ENCODE measurements at regions of chr9 and their contacts with region 1.

Region 1: DNA sequence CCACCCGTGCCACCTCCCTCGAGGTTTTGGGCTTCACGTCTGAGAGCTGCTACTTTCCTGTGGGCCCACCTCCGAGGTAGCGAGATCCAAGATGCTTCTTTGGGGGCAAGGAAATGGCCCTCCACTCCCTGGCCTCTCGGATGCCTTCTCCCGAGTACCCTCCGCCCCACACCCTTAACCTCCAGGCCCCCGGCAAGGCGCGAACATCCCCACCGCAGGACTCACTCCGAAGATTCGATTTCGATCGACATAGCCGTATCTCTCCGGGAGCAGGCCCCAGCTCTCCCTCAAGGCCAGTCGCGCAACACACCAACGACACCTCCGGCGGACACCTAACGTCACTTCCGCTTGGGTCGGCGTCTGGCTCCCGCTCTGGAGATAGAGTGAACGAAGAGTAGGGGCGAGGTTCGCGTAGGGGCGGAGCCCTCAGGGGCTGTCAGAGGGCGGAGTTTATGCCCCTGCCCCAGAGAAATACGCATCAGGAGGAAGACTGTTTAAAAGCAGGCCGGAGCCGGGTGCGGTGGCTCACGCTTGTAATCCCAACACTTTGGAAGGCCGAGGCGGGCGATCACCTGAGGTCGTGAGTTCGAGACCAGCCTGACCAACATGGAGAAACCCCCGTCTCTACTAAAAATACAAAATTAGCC is at the start of gene SMU1:
- DNase-seq: peak; percentile 96
- ATAC-seq: peak; percentile 98
- H3K4me3 ChIP-seq: peak within 1 kb of the TSS; percentile 90
- H3K27ac ChIP-seq: peak within 1 kb of the TSS; percentile 93
- H3K4me1 ChIP-seq: no peaks in the 10 kb centered on the region
- H3K27me3 ChIP-seq: no peaks in the 10 kb centered on the region
- CTCF ChIP-seq: no peak
- POLR2A ChIP-seq: peak; percentile 93
- RAD21 ChIP-seq: no peak
- total RNA-seq, gene SMU1: 36.0 and 37.8 TPM in 2 replicates

Region 2: DNA sequence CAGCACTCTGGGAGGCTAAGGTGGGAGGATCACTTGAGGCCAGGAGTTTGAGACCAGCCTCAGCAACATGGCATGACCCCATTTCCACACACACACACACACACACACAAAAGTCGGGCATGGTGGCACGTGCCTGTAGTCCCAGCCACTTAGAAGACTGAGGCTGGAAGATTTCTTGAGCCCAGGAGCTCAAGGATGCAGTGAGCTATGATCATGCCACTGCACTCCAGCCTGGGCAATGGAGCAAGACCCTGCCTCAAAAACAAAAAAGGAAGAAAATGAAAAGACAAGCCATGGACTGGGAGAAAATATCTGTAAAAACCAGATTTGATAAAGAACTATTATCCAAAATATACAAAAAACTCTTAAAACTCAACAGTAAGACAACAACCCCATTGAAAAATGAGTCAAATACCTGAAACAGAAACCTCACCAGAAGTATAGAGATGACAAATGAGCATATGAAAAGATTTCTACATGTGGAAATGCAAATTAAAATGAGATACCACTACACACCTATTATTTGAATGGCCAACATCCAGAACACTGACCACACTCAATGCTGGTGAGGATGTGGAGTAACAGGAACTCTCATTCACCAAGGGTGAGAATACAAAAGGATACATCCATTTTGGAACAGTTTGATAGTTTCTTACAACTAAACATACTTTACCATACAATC is 26.7 kb before region 1 on chr9:
- CTCF ChIA-PET with region 1: no interaction called
- POLR2A ChIA-PET with region 1: no interaction called
- dilution Hi-C with region 1: no loop called
- in situ Hi-C with region 1: no loop called
- intact Hi-C with region 1: loop called (anchors 2 kb)
- DNase-seq: no peak
- ATAC-seq: no peak
- H3K4me3 ChIP-seq: no peak overlapping the region
- H3K27ac ChIP-seq: no peak overlapping the region
- H3K4me1 ChIP-seq: no peaks in the 10 kb centered on the region
- H3K27me3 ChIP-seq: no peaks in the 10 kb centered on the region
- CTCF ChIP-seq: no peak
- POLR2A ChIP-seq: no peak
- RAD21 ChIP-seq: no peak

Region 3: DNA sequence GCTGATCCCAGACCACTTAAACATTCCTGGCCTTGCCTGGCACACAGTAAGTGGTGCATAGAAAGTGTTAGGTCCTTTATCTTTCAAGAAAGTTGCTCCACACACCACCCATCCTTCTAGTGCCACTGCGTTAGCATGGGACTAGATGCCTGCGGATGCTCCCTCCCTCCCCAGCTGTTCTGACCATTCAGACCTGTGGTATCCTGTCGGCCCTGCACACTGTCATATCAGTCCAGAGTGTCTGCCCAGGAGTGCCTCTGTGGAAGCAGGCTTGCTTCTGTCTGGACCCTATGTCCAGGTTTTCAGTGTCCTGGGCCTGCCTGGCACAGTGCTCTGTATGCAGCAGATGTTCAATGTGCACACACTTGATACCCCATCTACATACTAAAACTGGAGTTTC is 38.3 kb after region 1 on chr9:
- CTCF ChIA-PET with region 1: no interaction called
- POLR2A ChIA-PET with region 1: no interaction called
- dilution Hi-C with region 1: no loop called
- in situ Hi-C with region 1: no loop called
- intact Hi-C with region 1: loop called (anchors 1 kb)
- DNase-seq: no peak
- ATAC-seq: no peak
- H3K4me3 ChIP-seq: no peak overlapping the region
- H3K27ac ChIP-seq: no peak overlapping the region
- H3K4me1 ChIP-seq: peaks cover 5% of the 10 kb centered on the region
- H3K27me3 ChIP-seq: no peaks in the 10 kb centered on the region
- CTCF ChIP-seq: no peak
- POLR2A ChIP-seq: no peak
- RAD21 ChIP-seq: no peak

Region 4: GRCh38 chr9:33167046-33167808 is 90.7 kb after region 1 on chr9 and contains the start of gene B4GALT1:
- CTCF ChIA-PET with region 1: no interaction called
- POLR2A ChIA-PET with region 1: interaction called, 3 read pairs
- dilution Hi-C with region 1: no loop called
- in situ Hi-C with region 1: loop called (anchors 5 kb)
- intact Hi-C with region 1: loop called (anchors 1 kb)
- DNase-seq: peak; percentile 90
- ATAC-seq: peak; percentile 89
- H3K4me3 ChIP-seq: peak within 1 kb of the TSS; percentile 100
- H3K27ac ChIP-seq: peak within 1 kb of the TSS; percentile 99
- H3K4me1 ChIP-seq: peaks cover 33% of the 10 kb centered on the region
- H3K27me3 ChIP-seq: no peaks in the 10 kb centered on the region
- CTCF ChIP-seq: no peak; the same call in 1 of the 2 replicates
- POLR2A ChIP-seq: peak; percentile 92
- RAD21 ChIP-seq: no peak
- total RNA-seq, gene B4GALT1: 8.8 and 11.9 TPM in 2 replicates

Region 5: GRCh38 chr9:33264473-33265177 is 188.1 kb after region 1 on chr9 and contains the starts of genes BAG1 and CHMP5:
- CTCF ChIA-PET with region 1: no interaction called
- POLR2A ChIA-PET with region 1: no interaction called
- dilution Hi-C with region 1: no loop called
- in situ Hi-C with region 1: no loop called
- intact Hi-C with region 1: loop called (anchors 1 kb)
- DNase-seq: peak; percentile 99
- ATAC-seq: peak; percentile 98
- H3K4me3 ChIP-seq: peak within 1 kb of the TSS; percentile 91
- H3K27ac ChIP-seq: peak within 1 kb of the TSS; percentile 76
- H3K4me1 ChIP-seq: peaks cover 10% of the 10 kb centered on the region
- H3K27me3 ChIP-seq: no peaks in the 10 kb centered on the region
- CTCF ChIP-seq: peak; percentile 48
- POLR2A ChIP-seq: peak; percentile 83
- RAD21 ChIP-seq: no peak
- total RNA-seq, gene BAG1: 4.5 and 8.3 TPM in 2 replicates
- total RNA-seq, gene CHMP5: 70.6 and 95.5 TPM in 2 replicates

Measured in IMR-90 (cell line).